CD8-positive, alpha-beta memory T cell (primary cell): ENCODE measurements at regions of chr11 and their contacts with region 1.

Region 1: GRCh38 chr11:126282736-126283591 is at the start of gene TIRAP:
- DNase-seq: peak; percentile 44 to 81 (median 74)
- H3K4me3 ChIP-seq: peak within 1 kb of the TSS; percentile 88
- H3K4me3 Mint-ChIP-seq: peak within 1 kb of the TSS; percentile 92 to 98 (median 97)
- H3K27ac ChIP-seq: peak within 1 kb of the TSS; percentile 71
- H3K27ac Mint-ChIP-seq: peak within 1 kb of the TSS; percentile 92 to 99 (median 98)
- H3K4me1 ChIP-seq: peaks cover 40% of the 10 kb centered on the region
- H3K4me1 Mint-ChIP-seq: peaks cover 45 to 53% (median 53%) of the 10 kb centered on the region in 3 donors
- H3K27me3 ChIP-seq: no peaks in the 10 kb centered on the region
- H3K27me3 Mint-ChIP-seq: no peaks in the 10 kb centered on the region
- total RNA-seq, gene TIRAP: 10.6 to 11.3 TPM

Region 2: GRCh38 chr11:126246636-126247035 is 36.3 kb before region 1 on chr11:
- CTCF ChIA-PET with region 1: no interaction called
- POLR2A ChIA-PET with region 1: interaction called, 10 read pairs
- DNase-seq: no peak
- H3K4me3 ChIP-seq: no peak overlapping the region
- H3K4me3 Mint-ChIP-seq: no peak overlapping the region
- H3K27ac ChIP-seq: no peak overlapping the region
- H3K27ac Mint-ChIP-seq: no peak overlapping the region
- H3K4me1 ChIP-seq: no peaks in the 10 kb centered on the region
- H3K4me1 Mint-ChIP-seq: no peaks in the 10 kb centered on the region
- H3K27me3 ChIP-seq: no peaks in the 10 kb centered on the region
- H3K27me3 Mint-ChIP-seq: no peaks in the 10 kb centered on the region

Region 3: DNA sequence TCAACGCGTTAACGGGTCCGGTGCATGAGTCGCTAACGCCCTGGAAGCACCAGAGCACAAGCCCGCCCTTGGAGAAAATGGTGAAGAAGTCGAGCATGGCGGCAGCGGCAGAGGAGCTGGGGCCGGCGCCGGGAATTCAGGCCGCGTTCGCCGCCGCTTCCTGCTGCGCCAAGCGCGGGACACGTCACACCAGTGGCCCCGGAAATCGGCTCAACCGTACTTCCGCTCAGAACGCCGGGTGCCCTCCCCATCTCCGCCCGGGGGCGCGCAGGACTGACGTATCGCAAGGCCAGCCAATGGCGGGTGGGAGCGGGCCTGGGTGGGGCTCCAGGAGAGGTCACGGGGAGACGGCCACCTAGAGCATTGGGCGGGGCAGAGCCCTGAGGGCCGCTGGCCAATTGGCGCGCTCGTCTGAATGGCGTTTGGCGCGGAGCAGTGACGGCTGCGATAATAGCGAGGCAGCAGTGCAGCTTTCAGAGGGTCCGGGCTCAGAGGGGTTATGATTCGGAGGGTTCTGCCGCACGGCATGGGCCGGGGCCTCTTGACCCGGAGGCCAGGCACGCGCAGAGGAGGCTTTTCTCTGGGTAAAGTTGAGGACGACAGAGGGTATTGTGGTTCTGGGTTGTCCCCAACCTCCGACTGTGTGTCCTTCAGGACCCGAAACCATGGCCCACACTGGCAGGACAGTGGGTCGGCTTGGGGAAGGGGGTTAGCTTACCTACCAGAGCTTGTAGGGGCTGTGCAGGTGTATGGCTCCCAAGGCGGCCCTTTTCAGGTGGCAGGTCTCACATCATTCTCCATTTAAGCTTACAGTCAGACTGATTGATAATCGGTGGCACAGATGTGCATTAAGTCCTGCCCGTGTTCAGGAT is 14.0 kb before region 1 on chr11 and contains the starts of genes FOXRED1 and SRPRA:
- CTCF ChIA-PET with region 1: interaction called, 8 read pairs
- POLR2A ChIA-PET with region 1: interaction called, 46 read pairs
- DNase-seq: peak; percentile 100
- H3K4me3 ChIP-seq: peak within 1 kb of the TSS; percentile 99
- H3K4me3 Mint-ChIP-seq: peak within 1 kb of the TSS; percentile 85 to 98 (median 96)
- H3K27ac ChIP-seq: peak within 1 kb of the TSS; percentile 97
- H3K27ac Mint-ChIP-seq: peak within 1 kb of the TSS; percentile 92 to 100 (median 98)
- H3K4me1 ChIP-seq: peaks cover 23% of the 10 kb centered on the region
- H3K4me1 Mint-ChIP-seq: peaks cover 39 to 52% (median 48%) of the 10 kb centered on the region in 3 donors
- H3K27me3 ChIP-seq: no peaks in the 10 kb centered on the region
- H3K27me3 Mint-ChIP-seq: no peaks in the 10 kb centered on the region
- total RNA-seq, gene FOXRED1: 40.3 to 42.4 TPM
- total RNA-seq, gene SRPRA: 157 TPM

Region 4: DNA sequence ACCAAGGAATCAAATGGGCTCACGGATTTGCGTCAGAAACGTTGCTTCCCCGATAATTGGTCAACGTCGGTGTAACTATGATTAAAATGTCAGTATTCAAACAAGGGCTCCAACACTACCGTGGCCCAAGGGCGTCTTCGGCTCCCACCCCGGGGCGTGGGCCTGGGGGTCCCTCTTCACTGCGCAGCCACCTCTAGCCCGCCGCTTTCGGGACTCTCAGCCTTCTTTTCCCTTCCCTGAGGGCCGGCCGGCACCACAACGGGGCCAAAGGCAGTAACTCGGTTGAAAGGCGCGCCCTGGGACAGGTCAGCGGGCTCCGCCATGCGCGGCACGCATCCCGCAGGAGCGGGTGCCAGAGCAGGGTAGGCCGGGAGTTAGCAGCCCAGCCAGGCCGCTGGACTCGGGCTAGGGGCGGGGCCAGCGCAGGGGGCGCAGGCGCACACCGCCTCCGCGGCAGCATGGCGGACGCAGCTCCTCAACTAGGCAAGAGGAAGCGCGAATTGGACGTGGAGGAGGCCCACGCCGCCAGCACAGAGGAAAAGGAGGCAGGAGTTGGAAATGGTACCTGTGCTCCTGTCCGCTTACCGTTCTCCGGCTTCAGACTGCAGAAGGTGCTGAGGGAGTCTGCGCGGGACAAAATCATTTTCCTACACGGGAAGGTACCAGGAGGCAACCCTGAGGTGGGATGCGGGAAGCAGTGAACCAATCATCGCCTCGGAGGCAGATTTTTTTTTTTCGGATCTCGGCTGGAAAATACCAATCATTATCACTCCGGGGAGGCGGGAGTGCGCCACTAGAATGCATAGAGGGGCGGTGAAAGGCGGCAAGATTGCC is 20.9 kb after region 1 on chr11 and contains the start of gene DCPS:
- CTCF ChIA-PET with region 1: interaction called, 5 read pairs
- POLR2A ChIA-PET with region 1: interaction called, 11 read pairs
- DNase-seq: peak; percentile 80 to 90 (median 86)
- H3K4me3 ChIP-seq: peak within 1 kb of the TSS; percentile 97
- H3K4me3 Mint-ChIP-seq: peak within 1 kb of the TSS; percentile 88 to 100 (median 97)
- H3K27ac ChIP-seq: peak within 1 kb of the TSS; percentile 88
- H3K27ac Mint-ChIP-seq: peak within 1 kb of the TSS; percentile 83 to 99 (median 98)
- H3K4me1 ChIP-seq: peaks cover 28% of the 10 kb centered on the region
- H3K4me1 Mint-ChIP-seq: peaks cover 29 to 49% (median 45%) of the 10 kb centered on the region in 3 donors
- H3K27me3 ChIP-seq: no peaks in the 10 kb centered on the region
- H3K27me3 Mint-ChIP-seq: no peaks in the 10 kb centered on the region
- total RNA-seq, gene DCPS: 40.0 to 42.4 TPM

Region 5: GRCh38 chr11:126416542-126417090 is 133.7 kb after region 1 on chr11:
- CTCF ChIA-PET with region 1: no interaction called
- POLR2A ChIA-PET with region 1: no interaction called
- DNase-seq: peak; percentile 30 to 80 (median 50)
- H3K4me3 ChIP-seq: peak overlapping the region; percentile 28
- H3K4me3 Mint-ChIP-seq: peak overlapping the region in 6 of 7 donors; percentile 44 to 81 (median 73)
- H3K27ac ChIP-seq: no peak overlapping the region
- H3K27ac Mint-ChIP-seq: peak overlapping the region in 5 of 8 donors; percentile 23 to 87 (median 78)
- H3K4me1 ChIP-seq: peaks cover 7% of the 10 kb centered on the region
- H3K4me1 Mint-ChIP-seq: peaks cover 7 to 14% (median 8%) of the 10 kb centered on the region in 3 donors
- H3K27me3 ChIP-seq: no peaks in the 10 kb centered on the region
- H3K27me3 Mint-ChIP-seq: no peaks in the 10 kb centered on the region